ENCODE measurements at regions of chr6 and their contacts with region 1.

Region 1: DNA sequence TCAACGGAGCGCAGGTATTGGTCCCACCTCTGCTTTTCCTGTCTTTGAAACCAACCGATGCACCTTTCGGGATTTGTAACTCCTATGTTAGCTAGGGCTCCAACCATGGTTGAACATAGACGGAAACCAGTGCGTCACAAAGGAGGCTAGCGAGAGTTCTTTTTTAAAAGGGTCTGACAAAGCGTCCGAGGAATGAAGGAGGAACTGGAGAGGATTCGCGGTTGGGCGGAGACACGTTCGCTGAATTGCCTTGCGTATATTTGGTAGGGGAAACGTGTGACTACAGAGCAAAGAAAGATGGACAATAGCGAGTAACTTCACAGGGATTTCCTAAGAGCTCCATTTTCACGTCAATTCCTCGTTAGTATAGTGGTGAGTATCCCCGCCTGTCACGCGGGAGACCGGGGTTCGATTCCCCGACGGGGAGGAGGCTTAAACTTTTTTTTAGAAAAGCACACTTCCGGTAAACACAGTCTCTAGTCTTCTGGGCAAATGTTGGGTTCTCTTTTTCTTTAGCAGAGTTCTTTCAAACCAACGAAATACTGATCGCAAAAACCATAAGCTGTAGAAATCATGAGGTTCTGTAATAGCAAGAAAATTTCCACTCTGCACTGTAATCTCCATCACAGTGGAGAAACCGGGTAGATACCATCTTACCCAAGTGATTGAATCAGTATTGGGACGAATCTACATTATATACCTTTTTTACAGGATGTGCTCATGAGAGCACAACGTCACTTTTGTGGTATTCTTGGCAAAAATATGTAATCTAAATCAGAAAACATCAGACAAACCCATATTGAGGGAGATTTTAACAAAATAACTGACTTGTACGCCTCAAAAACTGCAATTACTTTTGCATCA is 6.6 kb upstream of the ZNF184 start:
- DNase-seq: peak; percentile 87
- H3K4me3 Mint-ChIP-seq: no peak overlapping the region
- H3K27ac Mint-ChIP-seq: no peak overlapping the region
- H3K4me1 Mint-ChIP-seq: no peaks in the 10 kb centered on the region
- H3K27me3 Mint-ChIP-seq: no peaks in the 10 kb centered on the region
- CTCF ChIP-seq: no peak

Region 2: DNA sequence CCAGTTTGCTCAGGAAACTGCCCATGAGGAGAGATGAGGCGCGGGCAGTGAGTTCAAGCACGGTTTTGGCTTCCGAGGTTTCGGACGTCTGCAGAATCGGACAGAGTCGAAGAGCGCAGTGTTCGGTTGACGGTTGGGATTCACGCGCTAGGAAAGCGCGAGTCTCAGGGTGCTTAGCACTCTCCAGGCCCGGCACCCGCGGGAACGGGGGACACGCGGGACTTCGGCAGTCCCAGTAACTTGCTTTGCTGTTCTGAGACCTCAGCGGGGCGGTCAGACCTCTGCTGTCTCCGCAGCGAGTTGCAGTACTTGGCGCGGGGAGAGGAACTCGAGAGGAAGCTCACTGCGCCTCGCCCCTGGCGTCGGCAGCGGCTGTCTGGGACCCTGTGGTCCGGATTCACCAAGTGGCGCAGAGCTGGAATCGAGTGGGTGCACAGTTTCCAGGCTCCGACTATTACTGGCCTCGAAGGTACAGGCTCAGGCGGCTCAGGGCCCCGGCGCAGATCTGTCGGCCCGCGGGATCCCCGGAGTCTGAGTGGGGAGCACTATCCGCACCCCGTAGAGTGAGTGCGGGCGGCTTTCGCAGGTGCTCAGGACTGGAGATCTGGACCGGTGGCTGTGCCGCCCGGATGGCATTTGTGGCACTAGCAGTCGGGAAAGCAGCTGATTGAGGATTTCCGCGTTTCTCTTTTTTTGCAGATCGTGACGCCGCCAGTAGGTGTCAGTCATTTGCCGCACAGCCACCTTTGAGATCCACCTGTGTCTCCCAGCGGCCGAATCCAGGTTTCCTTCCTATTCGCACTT is 167.2 kb before region 1 on chr6 and contains the start of gene POM121L2:
- CTCF ChIA-PET with region 1: interaction called, 3 read pairs
- POLR2A ChIA-PET with region 1: interaction called, 3 read pairs
- intact Hi-C with region 1: loop called (anchors 5 kb)
- DNase-seq: peak; percentile 84
- H3K4me3 Mint-ChIP-seq: peak within 1 kb of the TSS; percentile 73
- H3K27ac Mint-ChIP-seq: no peak within 1 kb of the TSS
- H3K4me1 Mint-ChIP-seq: no peaks in the 10 kb centered on the region
- H3K27me3 Mint-ChIP-seq: peaks cover 12% of the 10 kb centered on the region
- CTCF ChIP-seq: peak; percentile 87
- total RNA-seq, gene POM121L2: not detected in 2 replicates

Region 3: GRCh38 chr6:27374824-27375612 is 104.5 kb before region 1 on chr6:
- CTCF ChIA-PET with region 1: no interaction called
- POLR2A ChIA-PET with region 1: interaction called, 10 read pairs
- intact Hi-C with region 1: no loop called
- DNase-seq: peak; percentile 92
- H3K4me3 Mint-ChIP-seq: peak overlapping the region; percentile 80
- H3K27ac Mint-ChIP-seq: peak overlapping the region; percentile 36
- H3K4me1 Mint-ChIP-seq: peaks cover 11% of the 10 kb centered on the region
- H3K27me3 Mint-ChIP-seq: no peaks in the 10 kb centered on the region
- CTCF ChIP-seq: no peak

Region 4: DNA sequence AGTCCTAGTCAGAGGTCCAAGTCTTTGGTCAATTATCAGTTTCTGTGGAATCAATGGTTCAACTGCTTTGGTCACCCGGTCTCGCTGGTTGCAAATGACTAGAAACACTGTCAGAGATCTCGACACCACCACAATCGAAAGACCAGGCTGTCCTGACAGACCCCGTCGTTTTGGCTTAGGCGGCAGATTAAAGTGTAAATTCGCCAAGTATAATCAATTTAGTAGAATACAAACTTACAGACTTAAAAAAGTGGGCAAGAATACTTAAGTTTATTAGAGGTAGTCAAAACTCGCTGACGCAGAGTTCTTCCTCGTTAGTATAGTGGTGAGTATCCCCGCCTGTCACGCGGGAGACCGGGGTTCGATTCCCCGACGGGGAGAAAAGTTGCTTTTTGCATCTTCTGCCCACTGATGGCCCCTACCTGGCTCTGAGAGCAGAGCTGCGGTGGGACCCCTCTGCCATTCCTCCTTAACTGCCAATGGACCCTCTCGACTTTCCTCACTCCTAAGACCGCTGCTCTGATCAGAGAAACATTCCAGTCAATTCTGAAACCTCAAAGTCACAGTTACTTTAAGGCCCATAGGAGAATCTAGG is 24.0 kb after region 1 on chr6:
- CTCF ChIA-PET with region 1: interaction called, 3 read pairs
- POLR2A ChIA-PET with region 1: interaction called, 22 read pairs
- intact Hi-C with region 1: loop called (anchors 2 kb)
- DNase-seq: peak; percentile 74
- H3K4me3 Mint-ChIP-seq: peak overlapping the region; percentile 83
- H3K27ac Mint-ChIP-seq: peak overlapping the region; percentile 84
- H3K4me1 Mint-ChIP-seq: peaks cover 11% of the 10 kb centered on the region
- H3K27me3 Mint-ChIP-seq: no peaks in the 10 kb centered on the region
- CTCF ChIP-seq: no peak

Region 5: GRCh38 chr6:27608916-27609883 is 129.6 kb after region 1 on chr6:
- CTCF ChIA-PET with region 1: interaction called, 4 read pairs
- POLR2A ChIA-PET with region 1: interaction called, 16 read pairs
- intact Hi-C with region 1: loop called (anchors 10 kb)
- DNase-seq: peak; percentile 89
- H3K4me3 Mint-ChIP-seq: peak overlapping the region; percentile 47
- H3K27ac Mint-ChIP-seq: peak overlapping the region; percentile 83
- H3K4me1 Mint-ChIP-seq: peaks cover 22% of the 10 kb centered on the region
- H3K27me3 Mint-ChIP-seq: no peaks in the 10 kb centered on the region
- CTCF ChIP-seq: peak; percentile 77

Region 6: GRCh38 chr6:27687154-27688013 is 207.8 kb after region 1 on chr6:
- CTCF ChIA-PET with region 1: no interaction called
- POLR2A ChIA-PET with region 1: interaction called, 4 read pairs
- intact Hi-C with region 1: loop called (anchors 1 kb)
- DNase-seq: peak; percentile 87
- H3K4me3 Mint-ChIP-seq: peak overlapping the region; percentile 92
- H3K27ac Mint-ChIP-seq: peak overlapping the region; percentile 89
- H3K4me1 Mint-ChIP-seq: peaks cover 5% of the 10 kb centered on the region
- H3K27me3 Mint-ChIP-seq: no peaks in the 10 kb centered on the region
- CTCF ChIP-seq: peak; percentile 86